ENCODE measurements at regions of chrX and their contacts with region 1.

Region 1: GRCh38 chrX:69795702-69796101 is 179.8 kb downstream of the EDA start:
- DNase-seq: peak; percentile 69

Region 2: GRCh38 chrX:68995780-68996551 is 799.7 kb before region 1 on chrX:
- intact Hi-C with region 1: loop called in 1 of 2 experiments (anchors 5 kb)
- DNase-seq: no peak

Measured in posterior vena cava (tissue), 2 donors.